Heart right ventricle (tissue), 16 donors: ENCODE measurements at regions of chr16 and their contacts with region 1.

Region 1: GRCh38 chr16:2905431-2906387 is 6.0 kb upstream of the FLYWCH1 start:
- DNase-seq: peak; percentile 99
- ATAC-seq: peak; percentile 85 to 94 (median 90)
- H3K4me3 ChIP-seq: peak overlapping the region in 9 of 10 donors; percentile 83 to 98 (median 90)
- H3K27ac ChIP-seq: peak overlapping the region; percentile 93 to 99 (median 97)
- H3K4me1 ChIP-seq: peaks cover 3 to 22% (median 15%) of the 10 kb centered on the region in 9 donors
- H3K27me3 ChIP-seq: no peaks in the 10 kb centered on the region
- CTCF ChIP-seq: no peak

Region 2: DNA sequence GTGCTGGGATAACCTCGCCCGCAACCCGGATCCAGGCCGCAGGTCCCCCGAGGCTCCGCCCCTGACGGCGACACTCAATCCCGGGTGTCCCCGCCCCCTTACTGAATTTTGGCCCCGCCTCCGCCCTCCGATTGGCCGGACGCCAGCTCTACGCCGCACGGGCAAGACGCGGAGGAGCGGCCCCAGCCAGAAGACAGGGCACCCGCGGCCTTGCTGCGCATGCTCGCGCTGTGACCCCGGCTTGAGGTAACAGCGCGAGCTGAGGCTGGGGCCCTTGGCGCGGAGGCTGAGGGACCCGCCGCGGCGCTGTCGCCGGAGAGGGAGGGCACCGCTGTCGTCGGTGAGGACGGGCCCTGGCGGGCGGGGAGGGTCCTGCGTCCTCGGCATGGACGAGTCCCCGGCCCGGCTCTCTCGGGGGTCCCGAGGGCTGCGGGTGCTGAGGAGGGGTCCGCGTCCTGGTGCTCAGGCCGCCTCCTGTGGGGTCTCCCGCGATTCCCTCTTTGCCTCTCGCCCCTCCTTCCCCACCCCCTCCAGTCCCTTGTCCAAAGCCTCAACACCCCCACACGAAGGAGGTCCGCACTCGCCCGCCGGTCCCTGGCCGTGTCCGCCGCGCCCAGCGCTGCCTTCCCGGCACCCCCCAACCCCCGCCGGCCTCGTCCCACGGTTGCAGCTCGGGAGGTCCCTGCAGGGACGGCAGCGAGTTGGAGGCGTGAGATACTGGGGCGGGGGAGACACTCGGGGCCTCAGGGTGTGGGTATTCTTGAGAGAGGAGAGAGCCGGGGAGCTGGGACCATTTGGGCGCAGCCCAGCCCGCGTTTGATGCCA is 22.5 kb before region 1 on chr16 and contains the start of gene FLYWCH2:
- intact Hi-C with region 1: loop called in 5 of 10 experiments (anchors 1 to 2 kb)
- DNase-seq: peak; percentile 98 to 99
- ATAC-seq: peak; percentile 88 to 97 (median 94)
- H3K4me3 ChIP-seq: peak within 1 kb of the TSS; percentile 79 to 99 (median 93)
- H3K27ac ChIP-seq: peak within 1 kb of the TSS; percentile 93 to 99 (median 98)
- H3K4me1 ChIP-seq: peaks cover 3 to 19% (median 12%) of the 10 kb centered on the region in 9 donors
- H3K27me3 ChIP-seq: no peaks in the 10 kb centered on the region
- CTCF ChIP-seq: peak in 4 of 9 donors; percentile 5 to 25 (median 12)
- total RNA-seq, gene FLYWCH2: 18.1 to 28.9 (median 21.9) TPM

Region 3: DNA sequence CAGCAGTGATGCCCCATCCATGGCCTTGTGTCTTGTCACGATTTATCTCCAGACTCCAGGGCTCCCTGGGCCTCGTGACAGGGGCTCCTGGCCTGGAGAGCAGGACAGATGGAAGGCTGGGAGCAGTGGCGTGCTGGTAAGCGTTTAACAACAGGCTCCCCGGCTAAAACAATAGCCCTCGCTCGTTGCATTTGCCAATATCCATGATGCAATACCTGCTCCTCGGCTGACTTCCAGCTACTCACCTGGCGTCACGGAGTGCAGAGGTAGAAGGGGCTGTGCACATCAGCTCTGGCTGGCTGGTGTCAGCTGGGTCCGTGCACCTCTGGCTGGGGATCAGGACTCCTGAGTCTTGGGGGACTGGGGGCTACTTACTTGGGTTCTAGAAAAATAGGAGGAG is 132.5 kb after region 1 on chr16:
- intact Hi-C with region 1: no loop called
- DNase-seq: no peak
- ATAC-seq: no peak
- H3K4me3 ChIP-seq: no peak overlapping the region
- H3K27ac ChIP-seq: no peak overlapping the region
- H3K4me1 ChIP-seq: peaks cover 0 to 16% (median 7%) of the 10 kb centered on the region in 9 donors
- H3K27me3 ChIP-seq: peaks cover 16 to 99% (median 94%) of the 10 kb centered on the region in 7 donors
- CTCF ChIP-seq: no peak